Naive thymus-derived CD4-positive, alpha-beta T cell (primary cell): ENCODE measurements at regions of chr11 and their contacts with region 1.

Region 1: GRCh38 chr11:119641983-119642745 is 86.8 kb downstream of the NECTIN1 start:
- DNase-seq: peak in 2 of 9 donors; percentile 8 to 22
- ATAC-seq: no peak
- H3K4me3 ChIP-seq: no peak overlapping the region
- H3K4me3 Mint-ChIP-seq: no peak overlapping the region
- H3K27ac ChIP-seq: no peak overlapping the region
- H3K27ac Mint-ChIP-seq: no peak overlapping the region
- H3K4me1 ChIP-seq: no peaks in the 10 kb centered on the region
- H3K4me1 Mint-ChIP-seq: no peaks in the 10 kb centered on the region
- H3K27me3 ChIP-seq: no peaks in the 10 kb centered on the region
- H3K27me3 Mint-ChIP-seq: peaks cover 0 to 10% (median 2%) of the 10 kb centered on the region in 5 donors

Region 2: GRCh38 chr11:119741369-119742262 is 99.5 kb after region 1 on chr11:
- CTCF ChIA-PET with region 1: interaction called, 3 read pairs
- POLR2A ChIA-PET with region 1: no interaction called
- intact Hi-C with region 1: loop called in 1 of 2 experiments (anchors 1 kb)
- DNase-seq: peak in 7 of 9 donors; percentile 42 to 71 (median 57)
- ATAC-seq: peak; percentile 79
- H3K4me3 ChIP-seq: no peak overlapping the region
- H3K4me3 Mint-ChIP-seq: peak overlapping the region in 9 of 10 donors; percentile 6 to 85 (median 71)
- H3K27ac ChIP-seq: no peak overlapping the region
- H3K27ac Mint-ChIP-seq: peak overlapping the region in 2 of 9 donors; percentile 56 to 76
- H3K4me1 ChIP-seq: peaks cover 0 to 4% of the 10 kb centered on the region in 2 donors
- H3K4me1 Mint-ChIP-seq: peaks cover 6 to 16% (median 11%) of the 10 kb centered on the region in 7 donors
- H3K27me3 ChIP-seq: no peaks in the 10 kb centered on the region
- H3K27me3 Mint-ChIP-seq: peaks cover 42 to 62% (median 44%) of the 10 kb centered on the region in 5 donors